Motor neuron (in vitro differentiated cells): ENCODE measurements at regions of chr9 and their contacts with region 1.

Region 1: DNA sequence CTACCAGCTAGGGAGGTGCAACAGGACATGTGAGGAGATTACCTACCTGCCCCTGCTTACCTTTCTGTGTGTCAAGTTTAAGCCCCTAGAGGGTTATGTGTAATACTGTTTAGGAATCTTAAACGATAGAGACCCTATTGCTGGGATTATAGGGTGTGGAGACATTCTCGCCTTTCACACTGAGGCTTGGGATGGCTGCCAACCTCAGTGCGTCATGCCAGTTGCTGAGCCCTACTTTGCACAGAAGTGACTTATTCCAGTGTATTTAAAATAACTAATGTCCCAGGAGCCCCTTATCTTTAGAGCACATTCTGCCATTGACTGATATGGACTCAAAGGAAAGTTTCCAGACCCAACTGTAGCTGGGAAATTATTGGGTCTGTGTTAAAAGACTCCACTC is 76.6 kb upstream of the XPA start:
- ATAC-seq: peak in 2 of 8 experiments; percentile 85 to 88
- H3K4me3 ChIP-seq: no peak overlapping the region
- H3K27ac ChIP-seq: no peak overlapping the region
- H3K4me1 ChIP-seq: no peaks in the 10 kb centered on the region

Region 2: DNA sequence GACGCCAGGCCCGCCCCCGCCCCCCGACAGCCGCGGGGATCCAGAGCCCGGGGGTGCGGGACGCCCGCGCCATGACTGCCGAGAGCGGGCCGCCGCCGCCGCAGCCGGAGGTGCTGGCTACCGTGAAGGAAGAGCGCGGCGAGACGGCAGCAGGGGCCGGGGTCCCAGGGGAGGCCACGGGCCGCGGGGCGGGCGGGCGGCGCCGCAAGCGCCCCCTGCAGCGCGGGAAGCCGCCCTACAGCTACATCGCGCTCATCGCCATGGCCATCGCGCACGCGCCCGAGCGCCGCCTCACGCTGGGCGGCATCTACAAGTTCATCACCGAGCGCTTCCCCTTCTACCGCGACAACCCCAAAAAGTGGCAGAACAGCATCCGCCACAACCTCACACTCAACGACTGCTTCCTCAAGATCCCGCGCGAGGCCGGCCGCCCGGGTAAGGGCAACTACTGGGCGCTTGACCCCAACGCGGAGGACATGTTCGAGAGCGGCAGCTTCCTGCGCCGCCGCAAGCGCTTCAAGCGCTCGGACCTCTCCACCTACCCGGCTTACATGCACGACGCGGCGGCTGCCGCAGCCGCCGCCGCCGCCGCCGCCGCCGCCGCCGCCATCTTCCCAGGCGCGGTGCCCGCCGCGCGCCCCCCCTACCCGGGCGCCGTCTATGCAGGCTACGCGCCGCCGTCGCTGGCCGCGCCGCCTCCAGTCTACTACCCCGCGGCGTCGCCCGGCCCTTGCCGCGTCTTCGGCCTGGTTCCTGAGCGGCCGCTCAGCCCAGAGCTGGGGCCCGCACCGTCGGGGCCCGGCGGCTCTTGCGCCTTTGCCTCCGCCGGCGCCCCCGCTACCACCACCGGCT is 80.3 kb after region 1 on chr9:
- in situ Hi-C with region 1: loop called in 1 of 9 experiments (anchors 25 kb)
- ATAC-seq: peak; percentile 57 to 95 (median 92)
- H3K4me3 ChIP-seq: peak overlapping the region; percentile 35 to 64 (median 51)
- H3K27ac ChIP-seq: no peak overlapping the region
- H3K4me1 ChIP-seq: peaks cover 0 to 10% of the 10 kb centered on the region in 2 donors